Pancreas (tissue), 10 donors: ENCODE measurements at regions of chr20 and their contacts with region 1.

Region 1: GRCh38 chr20:54649511-54649962 is 174.1 kb downstream of the DOK5 start:
- DNase-seq: peak; percentile 77 to 93 (median 86)
- ATAC-seq: peak; percentile 73 to 87 (median 83)
- H3K4me3 ChIP-seq: no peak overlapping the region
- H3K27ac ChIP-seq: no peak overlapping the region
- H3K4me1 ChIP-seq: peaks cover 3 to 12% (median 9%) of the 10 kb centered on the region in 3 donors
- H3K27me3 ChIP-seq: no peaks in the 10 kb centered on the region
- CTCF ChIP-seq: peak; percentile 71 to 85 (median 81)

Region 2: DNA sequence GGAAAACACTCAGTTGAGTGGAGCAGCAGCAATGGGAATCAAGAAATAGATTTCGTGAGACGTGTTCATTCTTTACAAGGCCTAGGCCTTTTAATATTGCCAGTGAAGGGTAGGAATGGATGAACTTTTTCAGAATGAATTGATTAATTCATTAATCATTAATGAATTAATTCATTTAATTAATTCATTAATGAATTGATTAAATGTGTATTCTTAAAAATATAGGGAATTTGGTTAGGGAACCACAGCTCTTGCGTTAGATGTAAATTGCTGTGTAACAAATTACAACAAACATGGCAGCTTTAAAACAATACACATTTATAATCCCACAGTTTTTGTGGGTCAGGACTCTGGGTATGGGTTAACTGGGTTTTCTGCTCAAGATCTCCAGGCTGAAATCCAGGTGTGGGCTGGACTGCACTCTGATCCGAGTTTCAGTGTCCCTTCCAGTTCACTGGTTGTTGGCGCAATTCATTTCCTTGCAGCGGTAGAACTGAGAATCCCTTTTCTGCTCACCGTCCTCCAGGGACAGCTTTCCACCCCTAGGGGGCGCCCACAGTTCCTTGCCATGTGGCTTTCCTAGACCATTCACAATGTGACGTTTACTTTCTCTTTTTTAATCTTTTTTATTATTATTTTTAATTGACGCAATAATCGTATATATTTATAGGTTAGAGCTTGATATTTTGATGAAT is 546.3 kb before region 1 on chr20:
- intact Hi-C with region 1: loop called in 2 of 3 experiments (anchors 5 kb)
- DNase-seq: peak; percentile 62 to 96 (median 82)
- ATAC-seq: peak; percentile 85 to 97 (median 90)
- H3K4me3 ChIP-seq: no peak overlapping the region
- H3K27ac ChIP-seq: no peak overlapping the region
- H3K4me1 ChIP-seq: peaks cover 0 to 8% (median 0%) of the 10 kb centered on the region in 3 donors
- H3K27me3 ChIP-seq: no peaks in the 10 kb centered on the region
- CTCF ChIP-seq: peak; percentile 84 to 88 (median 86)

Region 3: DNA sequence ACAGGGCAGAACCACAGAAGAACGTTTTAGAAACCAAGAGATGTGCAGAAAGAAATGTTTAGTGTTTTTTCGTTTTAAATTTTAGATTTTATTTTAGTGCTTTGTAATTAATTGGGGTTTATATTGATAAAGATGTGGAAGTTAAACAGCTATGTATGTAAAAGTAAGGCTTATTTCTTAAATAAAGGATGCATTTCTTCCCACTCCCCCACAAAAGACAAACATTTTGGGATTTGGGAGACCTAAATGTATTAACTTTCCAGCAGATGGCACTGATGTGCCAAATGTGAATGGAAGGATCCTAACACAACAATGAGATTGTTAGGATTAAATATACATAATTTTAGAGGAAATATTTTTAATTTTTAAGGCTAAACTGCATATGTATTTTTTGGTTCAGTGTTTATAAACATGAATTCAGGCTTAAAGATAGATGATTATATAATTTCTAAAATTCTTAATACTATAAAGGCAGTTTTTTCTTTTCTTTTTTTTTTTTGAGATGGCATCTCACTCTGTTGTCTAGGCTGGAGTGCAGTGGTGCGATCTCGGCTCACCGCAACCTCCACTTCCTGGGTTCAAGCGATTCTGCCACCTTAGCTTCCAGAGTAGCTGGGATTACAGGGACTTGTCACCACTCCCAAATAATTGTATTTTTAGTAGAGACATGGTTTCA is 429.6 kb before region 1 on chr20:
- intact Hi-C with region 1: loop called in 1 of 3 experiments (anchors 5 kb)
- DNase-seq: no peak
- ATAC-seq: peak in 2 of 4 donors; percentile 45 to 61
- H3K4me3 ChIP-seq: no peak overlapping the region
- H3K27ac ChIP-seq: no peak overlapping the region
- H3K4me1 ChIP-seq: peaks cover 0 to 14% (median 12%) of the 10 kb centered on the region in 3 donors
- H3K27me3 ChIP-seq: no peaks in the 10 kb centered on the region
- CTCF ChIP-seq: peak in 2 of 4 donors; percentile 12 to 22

Region 4: DNA sequence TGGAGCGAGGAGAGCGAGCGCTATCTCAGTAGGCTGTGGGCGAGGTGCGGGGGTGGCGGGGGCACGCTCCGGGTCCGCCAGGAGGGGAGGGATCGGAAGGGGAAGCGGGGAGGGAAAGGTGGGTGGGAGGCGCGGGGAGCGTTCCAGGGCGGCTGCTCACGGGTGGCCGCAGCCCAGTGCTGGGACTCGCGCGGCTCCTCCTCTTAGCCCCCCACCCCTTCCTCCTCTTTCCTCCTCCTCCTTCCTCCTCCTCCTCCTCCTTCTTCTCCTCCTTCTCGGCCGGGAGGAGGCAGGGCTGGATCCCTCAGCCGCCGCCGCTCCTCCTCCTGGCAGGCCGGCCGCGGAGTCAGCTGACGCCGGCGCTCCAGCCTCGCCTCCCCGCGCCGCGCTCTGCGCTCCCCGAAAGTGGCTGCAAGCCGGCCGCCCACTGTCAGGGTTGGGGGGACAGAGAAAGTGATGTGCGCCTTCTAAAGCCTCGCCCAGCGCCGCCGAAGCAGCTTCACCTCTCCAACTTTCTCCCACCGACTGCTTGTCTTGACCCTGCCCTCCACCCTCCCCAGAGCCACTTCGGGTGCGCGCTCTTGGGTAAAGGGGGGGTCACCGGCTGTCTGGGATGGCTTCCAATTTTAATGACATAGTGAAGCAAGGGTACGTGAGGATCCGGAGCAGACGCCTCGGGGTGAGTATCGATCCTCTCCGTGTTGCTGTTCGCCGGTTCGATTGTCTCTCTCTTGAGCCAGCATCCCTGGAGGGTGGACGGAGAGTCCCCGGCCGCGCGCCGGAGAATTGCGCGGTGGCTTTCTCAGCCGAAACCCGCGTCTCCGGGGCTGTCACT is 174.0 kb before region 1 on chr20 and contains the start of gene DOK5:
- intact Hi-C with region 1: no loop called
- DNase-seq: peak in 4 of 6 donors; percentile 10 to 70 (median 34)
- ATAC-seq: peak; percentile 61 to 90 (median 84)
- H3K4me3 ChIP-seq: peak within 1 kb of the TSS; percentile 13 to 52 (median 43)
- H3K27ac ChIP-seq: no peak within 1 kb of the TSS
- H3K4me1 ChIP-seq: peaks cover 0 to 4% (median 0%) of the 10 kb centered on the region in 3 donors
- H3K27me3 ChIP-seq: peaks cover 0 to 41% (median 11%) of the 10 kb centered on the region in 4 donors
- CTCF ChIP-seq: no peak
- total RNA-seq, gene DOK5: 0.24 to 1.2 (median 0.73) TPM

Region 5: DNA sequence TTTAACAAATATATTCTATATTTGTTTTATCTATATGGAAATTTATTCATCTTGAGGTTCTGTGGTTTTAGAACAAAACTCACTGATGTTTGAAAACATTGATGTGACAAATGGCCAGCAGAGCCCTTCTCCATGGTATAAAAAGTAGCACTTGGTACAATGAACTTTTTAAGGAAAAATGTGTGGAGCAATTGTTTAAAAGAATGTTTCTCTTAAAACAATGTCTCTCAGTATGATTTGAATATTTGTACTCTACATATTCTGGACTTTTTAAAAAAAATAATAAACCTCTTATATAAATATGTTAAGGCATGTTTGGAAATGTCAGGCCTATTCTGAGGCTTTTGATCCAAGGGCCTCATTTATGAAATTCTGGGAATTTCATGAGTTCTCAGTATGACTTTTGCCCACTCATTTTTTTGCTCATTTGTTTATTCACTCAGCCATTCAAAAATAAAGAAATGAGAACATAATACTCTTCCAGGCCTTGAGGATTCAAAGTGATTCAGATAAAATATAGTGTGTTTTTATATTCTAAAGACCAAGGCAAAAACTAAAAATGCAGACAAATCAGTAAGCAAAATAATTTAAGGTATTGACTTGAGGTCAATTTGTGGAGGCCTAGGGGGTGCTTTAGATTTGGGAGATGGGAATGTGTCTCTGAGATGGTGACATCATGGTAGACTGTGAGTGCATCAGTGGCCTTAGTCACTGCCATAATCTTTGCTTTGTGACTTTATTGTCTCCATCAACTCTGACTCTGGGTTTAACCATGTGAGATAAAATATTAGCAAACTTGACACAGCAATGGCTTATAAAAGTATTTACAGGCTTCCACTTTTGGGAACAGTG is 113.7 kb before region 1 on chr20:
- intact Hi-C with region 1: no loop called
- DNase-seq: no peak
- ATAC-seq: no peak
- H3K4me3 ChIP-seq: no peak overlapping the region
- H3K27ac ChIP-seq: no peak overlapping the region
- H3K4me1 ChIP-seq: no peaks in the 10 kb centered on the region
- H3K27me3 ChIP-seq: no peaks in the 10 kb centered on the region
- CTCF ChIP-seq: no peak

Region 6: GRCh38 chr20:54545689-54546517 is 103.6 kb before region 1 on chr20:
- intact Hi-C with region 1: no loop called
- DNase-seq: no peak
- ATAC-seq: no peak
- H3K4me3 ChIP-seq: no peak overlapping the region
- H3K27ac ChIP-seq: no peak overlapping the region
- H3K4me1 ChIP-seq: no peaks in the 10 kb centered on the region
- H3K27me3 ChIP-seq: no peaks in the 10 kb centered on the region
- CTCF ChIP-seq: no peak